ENCODE measurements at regions of chr9 and their contacts with region 1.

Region 1: GRCh38 chr9:71249729-71250317 is 128.4 kb upstream of the TRPM3 start:
- ATAC-seq: peak; percentile 62 to 88 (median 77)
- H3K4me3 ChIP-seq: no peak overlapping the region
- H3K27ac ChIP-seq: no peak overlapping the region
- H3K4me1 ChIP-seq: peaks cover 0 to 7% of the 10 kb centered on the region in 2 donors

Region 2: GRCh38 chr9:70924895-70925547 is 324.8 kb before region 1 on chr9:
- in situ Hi-C with region 1: loop called in 3 of 9 experiments (anchors 10 to 25 kb)
- ATAC-seq: peak; percentile 44 to 99 (median 72)
- H3K4me3 ChIP-seq: no peak overlapping the region
- H3K27ac ChIP-seq: no peak overlapping the region
- H3K4me1 ChIP-seq: no peaks in the 10 kb centered on the region